A673 (cell line): ENCODE measurements at regions of chr17 and their contacts with region 1.

Region 1: GRCh38 chr17:63406689-63407330 is 39.3 kb downstream of the CYB561 start:
- DNase-seq: peak; percentile 89
- H3K4me3 ChIP-seq: no peak overlapping the region
- H3K27ac ChIP-seq: no peak overlapping the region
- H3K4me1 ChIP-seq: peaks cover 9% of the 10 kb centered on the region
- H3K27me3 ChIP-seq: no peaks in the 10 kb centered on the region
- CTCF ChIP-seq: peak; percentile 86

Region 2: GRCh38 chr17:62703775-62704378 is 702.9 kb before region 1 on chr17:
- CTCF ChIA-PET with region 1: no interaction called
- POLR2A ChIA-PET with region 1: no interaction called
- intact Hi-C with region 1: loop called (anchors 5 kb)
- DNase-seq: peak; percentile 70
- H3K4me3 ChIP-seq: peak overlapping the region; percentile 62
- H3K27ac ChIP-seq: no peak overlapping the region
- H3K4me1 ChIP-seq: peaks cover 6% of the 10 kb centered on the region
- H3K27me3 ChIP-seq: no peaks in the 10 kb centered on the region
- CTCF ChIP-seq: peak; percentile 81

Region 3: DNA sequence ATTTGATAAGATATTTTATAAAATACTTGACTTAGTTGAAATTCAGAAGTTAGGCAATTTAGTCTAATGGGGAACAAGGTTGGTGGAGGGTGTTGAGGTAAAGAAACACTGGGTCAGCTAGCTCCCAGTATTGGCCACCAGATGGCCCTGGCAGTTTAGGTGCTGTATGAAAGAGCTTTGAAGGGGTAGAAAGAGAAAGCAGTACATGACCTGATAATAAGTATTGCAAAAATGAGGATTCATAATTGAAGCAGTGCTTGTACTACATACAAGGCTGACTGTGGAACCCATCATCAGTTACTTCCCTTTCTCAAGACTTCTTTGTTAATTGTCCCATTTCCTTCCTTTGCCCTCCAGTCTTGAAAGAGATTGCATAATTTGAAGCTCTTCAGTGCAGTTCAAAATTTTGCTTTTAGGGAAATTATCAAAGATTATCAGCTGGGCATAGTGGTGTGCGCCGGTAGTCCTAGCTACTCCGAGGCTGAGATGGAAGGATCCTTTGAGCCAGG is 411.4 kb before region 1 on chr17:
- CTCF ChIA-PET with region 1: interaction called, 24 read pairs
- POLR2A ChIA-PET with region 1: no interaction called
- intact Hi-C with region 1: loop called (anchors 2 kb)
- DNase-seq: peak; percentile 49
- H3K4me3 ChIP-seq: no peak overlapping the region
- H3K27ac ChIP-seq: no peak overlapping the region
- H3K4me1 ChIP-seq: no peaks in the 10 kb centered on the region
- H3K27me3 ChIP-seq: no peaks in the 10 kb centered on the region
- CTCF ChIP-seq: peak; percentile 70

Region 4: DNA sequence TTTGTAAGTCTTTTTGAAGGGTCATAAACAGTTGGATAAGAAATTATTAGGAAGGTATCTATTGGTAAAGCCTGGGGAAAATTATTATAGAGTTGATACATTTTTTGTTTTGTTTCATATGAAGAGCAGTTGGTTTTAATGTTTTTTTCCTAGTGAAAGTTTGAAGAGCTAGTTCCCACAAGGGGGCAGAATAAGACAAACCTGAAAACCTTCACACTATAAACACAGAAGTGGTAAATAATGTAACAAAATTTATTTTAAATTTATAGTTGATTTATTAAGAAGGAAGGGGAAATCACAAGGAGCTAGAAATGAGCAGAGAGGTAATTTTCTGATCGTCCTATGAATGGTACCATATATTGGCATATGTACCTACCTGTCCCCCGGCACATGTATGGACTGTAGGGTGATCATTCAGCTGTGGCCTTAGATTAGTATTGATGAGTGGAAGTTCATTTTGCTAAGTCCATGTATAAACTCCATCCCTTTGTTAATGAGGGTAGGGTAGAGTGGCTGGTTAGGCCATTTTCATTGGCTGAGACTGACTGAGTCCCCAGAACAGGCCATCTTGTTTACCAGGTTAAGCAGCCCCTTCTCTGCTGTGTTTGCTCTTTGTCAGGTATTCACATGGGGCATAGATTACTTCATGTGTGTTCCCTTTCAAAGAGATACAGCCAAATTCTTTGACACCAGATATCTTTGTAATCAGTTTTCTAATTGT is 324.4 kb before region 1 on chr17:
- CTCF ChIA-PET with region 1: interaction called, 30 read pairs
- POLR2A ChIA-PET with region 1: no interaction called
- intact Hi-C with region 1: loop called (anchors 2 kb)
- DNase-seq: peak; percentile 27
- H3K4me3 ChIP-seq: no peak overlapping the region
- H3K27ac ChIP-seq: no peak overlapping the region
- H3K4me1 ChIP-seq: no peaks in the 10 kb centered on the region
- H3K27me3 ChIP-seq: no peaks in the 10 kb centered on the region
- CTCF ChIP-seq: peak; percentile 55

Region 5: DNA sequence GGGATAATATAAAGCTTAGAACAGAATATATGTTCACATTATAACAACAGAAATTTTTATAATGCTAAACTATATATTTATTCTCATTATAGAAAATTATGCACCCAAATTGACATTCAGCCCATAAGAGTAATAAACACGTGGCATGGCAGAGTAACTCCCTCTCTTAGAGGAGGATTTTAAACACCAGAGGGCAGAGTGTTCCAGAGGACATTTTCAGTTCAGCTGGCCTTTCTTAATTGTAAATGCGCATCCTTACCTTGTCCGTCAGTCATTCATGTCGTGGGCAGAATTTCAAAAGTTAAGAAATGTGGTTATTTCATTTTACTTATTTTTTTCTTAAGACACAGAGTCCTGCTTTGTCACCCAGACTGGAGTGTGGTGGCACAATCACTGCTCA is 293.6 kb before region 1 on chr17:
- CTCF ChIA-PET with region 1: interaction called, 9 read pairs
- POLR2A ChIA-PET with region 1: no interaction called
- intact Hi-C with region 1: loop called (anchors 2 kb)
- DNase-seq: peak; percentile 31
- H3K4me3 ChIP-seq: no peak overlapping the region
- H3K27ac ChIP-seq: no peak overlapping the region
- H3K4me1 ChIP-seq: no peaks in the 10 kb centered on the region
- H3K27me3 ChIP-seq: no peaks in the 10 kb centered on the region
- CTCF ChIP-seq: peak; percentile 41; the same call in 1 of the 2 replicates

Region 6: DNA sequence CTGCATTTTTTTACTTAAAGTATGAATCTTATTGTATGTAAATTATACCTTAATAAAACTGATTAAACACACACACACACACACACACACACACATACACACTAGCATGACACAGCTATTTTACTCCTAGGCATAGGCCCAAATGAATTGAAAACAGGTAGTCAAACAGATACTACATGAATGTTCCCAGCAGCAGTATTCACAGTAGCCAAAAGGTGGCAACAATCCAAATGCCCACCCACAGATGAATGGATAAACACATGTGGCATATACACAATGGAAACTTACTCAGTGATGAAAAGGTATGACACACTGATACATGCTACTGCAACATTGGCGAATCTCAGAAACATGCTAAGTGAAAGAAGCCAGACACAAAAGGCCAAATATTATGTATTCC is 184.2 kb before region 1 on chr17:
- CTCF ChIA-PET with region 1: no interaction called
- POLR2A ChIA-PET with region 1: no interaction called
- intact Hi-C with region 1: loop called (anchors 10 kb)
- DNase-seq: peak; percentile 7
- H3K4me3 ChIP-seq: no peak overlapping the region
- H3K27ac ChIP-seq: no peak overlapping the region
- H3K4me1 ChIP-seq: no peaks in the 10 kb centered on the region
- H3K27me3 ChIP-seq: no peaks in the 10 kb centered on the region
- CTCF ChIP-seq: no peak

Region 7: GRCh38 chr17:63490321-63490720 is 83.5 kb after region 1 on chr17:
- CTCF ChIA-PET with region 1: no interaction called
- POLR2A ChIA-PET with region 1: no interaction called
- intact Hi-C with region 1: no loop called
- DNase-seq: no peak
- H3K4me3 ChIP-seq: no peak overlapping the region
- H3K27ac ChIP-seq: no peak overlapping the region
- H3K4me1 ChIP-seq: no peaks in the 10 kb centered on the region
- H3K27me3 ChIP-seq: no peaks in the 10 kb centered on the region
- CTCF ChIP-seq: no peak

Region 8: GRCh38 chr17:64399071-64399766 is 992.4 kb after region 1 on chr17:
- CTCF ChIA-PET with region 1: no interaction called
- POLR2A ChIA-PET with region 1: no interaction called
- intact Hi-C with region 1: no loop called
- DNase-seq: no peak
- H3K4me3 ChIP-seq: no peak overlapping the region
- H3K27ac ChIP-seq: no peak overlapping the region
- H3K4me1 ChIP-seq: no peaks in the 10 kb centered on the region
- H3K27me3 ChIP-seq: no peaks in the 10 kb centered on the region
- CTCF ChIP-seq: no peak